ENCODE measurements at regions of chr9 and their contacts with region 1.

Region 1: GRCh38 chr9:32589083-32589723 is 16.2 kb upstream of the NDUFB6 start:
- DNase-seq: peak; percentile 8
- H3K4me3 ChIP-seq: no peak overlapping the region
- H3K27ac ChIP-seq: no peak overlapping the region
- H3K27me3 ChIP-seq: no peaks in the 10 kb centered on the region
- CTCF ChIP-seq: peak; percentile 70

Region 2: DNA sequence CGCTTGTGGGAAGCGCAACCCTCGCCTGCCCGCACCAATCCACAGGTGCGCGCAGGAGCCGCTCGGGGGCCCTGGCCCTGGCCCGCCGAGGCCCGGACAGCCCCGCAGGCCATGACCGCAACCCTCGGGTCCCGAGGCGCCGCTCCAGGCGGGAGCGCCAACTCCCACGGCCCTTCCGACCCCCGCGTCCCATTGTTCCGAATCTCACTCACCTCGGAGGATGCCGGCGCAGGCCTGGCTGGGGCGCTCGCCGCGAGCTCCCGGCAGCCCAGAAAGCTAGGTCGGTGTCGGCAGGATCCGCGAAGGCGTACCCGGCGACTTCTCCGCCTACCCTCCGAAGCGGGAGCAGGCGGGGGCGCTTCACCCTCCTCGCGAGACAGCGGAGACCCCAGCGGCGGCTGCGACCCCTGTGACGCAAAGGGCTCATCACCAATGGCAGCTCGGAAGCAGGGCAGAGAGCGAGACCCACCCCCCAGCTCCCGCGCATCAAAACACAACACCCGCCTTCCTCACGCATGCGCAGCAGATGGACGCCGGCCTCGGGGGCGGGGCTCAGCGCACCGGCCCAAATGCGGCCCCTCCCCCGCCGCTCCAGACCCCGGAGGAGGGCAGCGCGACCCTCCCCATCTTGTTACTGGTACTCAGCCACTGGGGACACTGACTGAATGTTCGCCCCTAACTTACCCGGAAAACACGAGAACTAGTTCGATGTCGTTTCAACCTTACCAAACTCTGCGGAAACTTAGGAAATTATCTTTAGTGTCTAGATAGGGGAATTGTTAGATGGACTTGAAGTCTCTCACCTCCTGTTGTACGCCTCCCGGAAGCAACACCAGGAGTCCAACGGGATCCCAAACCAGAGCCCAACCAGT is 38.4 kb before region 1 on chr9:
- CTCF ChIA-PET with region 1: no interaction called
- POLR2A ChIA-PET with region 1: no interaction called
- DNase-seq: peak; percentile 86
- H3K4me3 ChIP-seq: peak overlapping the region; percentile 82
- H3K27ac ChIP-seq: peak overlapping the region; percentile 85
- H3K27me3 ChIP-seq: no peaks in the 10 kb centered on the region
- CTCF ChIP-seq: 0 out of 2 replicates have a peak, but pooled peaks have one; percentile 10

Region 3: GRCh38 chr9:32603914-32604741 is 14.9 kb after region 1 on chr9:
- CTCF ChIA-PET with region 1: interaction called, 18 read pairs
- POLR2A ChIA-PET with region 1: no interaction called
- DNase-seq: no peak
- H3K4me3 ChIP-seq: no peak overlapping the region
- H3K27ac ChIP-seq: no peak overlapping the region
- H3K27me3 ChIP-seq: peaks cover 6% of the 10 kb centered on the region
- CTCF ChIP-seq: no peak

Region 4: GRCh38 chr9:32706004-32706749 is 117.0 kb after region 1 on chr9:
- CTCF ChIA-PET with region 1: no interaction called
- POLR2A ChIA-PET with region 1: no interaction called
- DNase-seq: no peak
- H3K4me3 ChIP-seq: no peak overlapping the region
- H3K27ac ChIP-seq: no peak overlapping the region
- H3K27me3 ChIP-seq: no peaks in the 10 kb centered on the region
- CTCF ChIP-seq: no peak

Region 5: DNA sequence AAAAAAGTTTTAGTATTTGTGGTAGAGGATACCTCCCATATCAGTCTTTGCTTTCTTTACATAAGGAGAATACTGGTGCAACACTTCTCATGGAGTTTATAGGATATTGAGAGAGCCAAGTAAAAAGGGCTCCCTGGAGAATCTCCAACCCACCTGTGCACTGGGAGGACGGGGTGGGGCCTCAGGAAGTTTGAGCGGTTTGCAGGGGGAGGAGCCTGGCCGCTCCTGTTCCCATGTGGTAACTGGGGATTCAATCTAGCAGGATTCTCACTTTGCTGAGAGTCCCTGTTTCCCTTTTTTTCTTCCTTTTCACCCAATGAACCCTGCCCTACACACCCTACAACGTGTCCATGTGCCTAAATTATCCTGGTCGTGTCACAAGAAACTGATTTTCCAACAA is 329.4 kb after region 1 on chr9:
- CTCF ChIA-PET with region 1: no interaction called
- POLR2A ChIA-PET with region 1: no interaction called
- DNase-seq: no peak
- H3K4me3 ChIP-seq: no peak overlapping the region
- H3K27ac ChIP-seq: no peak overlapping the region
- H3K27me3 ChIP-seq: peaks cover 7% of the 10 kb centered on the region
- CTCF ChIP-seq: no peak

Region 6: GRCh38 chr9:32968101-32969011 is 379.2 kb after region 1 on chr9:
- CTCF ChIA-PET with region 1: interaction called, 155 read pairs
- POLR2A ChIA-PET with region 1: no interaction called
- DNase-seq: no peak
- H3K4me3 ChIP-seq: no peak overlapping the region
- H3K27ac ChIP-seq: no peak overlapping the region
- H3K27me3 ChIP-seq: no peaks in the 10 kb centered on the region
- CTCF ChIP-seq: peak; percentile 81